Activated CD4-positive, alpha-beta memory T cell treated with anti-CD3 and anti-CD28 coated beads, Interleukin-2, amount 10 ng/mL, durations not matched to agents 7 days and 5 days (primary cell): ENCODE measurements at regions of chr12 and their contacts with region 1.

Region 1: GRCh38 chr12:120649442-120650232 is 9.2 kb downstream of the CABP1 start:
- DNase-seq: no peak
- H3K4me3 Mint-ChIP-seq: no peak overlapping the region
- H3K27ac Mint-ChIP-seq: no peak overlapping the region
- H3K4me1 Mint-ChIP-seq: peaks cover 16% of the 10 kb centered on the region
- H3K27me3 Mint-ChIP-seq: peaks cover 52% of the 10 kb centered on the region

Region 2: DNA sequence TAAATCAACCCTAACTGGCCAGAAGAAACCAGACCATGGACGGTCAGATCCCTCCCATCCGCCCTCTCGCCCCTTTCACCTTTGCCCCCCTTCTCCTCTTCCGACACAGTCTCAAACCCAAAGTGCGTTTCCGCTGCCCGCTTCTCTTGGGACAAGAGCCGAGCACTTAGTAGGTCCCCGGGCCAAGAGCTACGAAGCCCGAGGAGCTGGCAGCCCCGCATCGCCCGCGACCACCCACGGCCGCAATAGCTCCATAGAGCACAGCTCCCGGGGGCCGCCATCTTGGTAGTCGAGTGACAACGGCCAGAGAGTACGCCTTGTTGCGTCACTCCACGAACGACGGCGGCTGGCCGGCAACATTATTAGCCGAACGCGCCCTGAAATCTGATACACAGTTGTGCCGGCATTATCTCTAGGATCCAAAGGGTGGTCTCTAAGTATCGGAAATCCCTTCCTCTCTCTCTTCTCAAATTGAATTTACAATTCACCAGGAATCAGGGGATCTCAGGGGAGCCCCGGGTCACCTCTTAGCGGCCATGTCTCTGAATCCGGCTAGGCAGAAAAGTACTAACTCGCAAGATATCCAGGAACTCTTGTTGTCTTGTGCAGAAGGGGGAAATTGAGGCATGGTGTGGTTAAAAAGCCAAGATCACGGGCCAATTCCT is 120.6 kb before region 1 on chr12 and contains the start of gene COQ5:
- CTCF ChIA-PET with region 1: no interaction called
- POLR2A ChIA-PET with region 1: no interaction called
- DNase-seq: peak; percentile 88
- H3K4me3 Mint-ChIP-seq: peak within 1 kb of the TSS; percentile 100
- H3K27ac Mint-ChIP-seq: peak within 1 kb of the TSS; percentile 97
- H3K4me1 Mint-ChIP-seq: peaks cover 29% of the 10 kb centered on the region
- H3K27me3 Mint-ChIP-seq: no peaks in the 10 kb centered on the region
- total RNA-seq, gene COQ5: 30.3 to 30.8 TPM

Region 3: GRCh38 chr12:120625557-120626419 is 23.8 kb before region 1 on chr12:
- CTCF ChIA-PET with region 1: interaction called, 10 read pairs
- POLR2A ChIA-PET with region 1: no interaction called
- DNase-seq: no peak
- H3K4me3 Mint-ChIP-seq: no peak overlapping the region
- H3K27ac Mint-ChIP-seq: no peak overlapping the region
- H3K4me1 Mint-ChIP-seq: no peaks in the 10 kb centered on the region
- H3K27me3 Mint-ChIP-seq: peaks cover 3% of the 10 kb centered on the region

Region 4: GRCh38 chr12:120677765-120678473 is 28.3 kb after region 1 on chr12:
- CTCF ChIA-PET with region 1: interaction called, 36 read pairs
- POLR2A ChIA-PET with region 1: interaction called, 4 read pairs
- DNase-seq: peak; percentile 65
- H3K4me3 Mint-ChIP-seq: peak overlapping the region; percentile 62
- H3K27ac Mint-ChIP-seq: peak overlapping the region; percentile 93
- H3K4me1 Mint-ChIP-seq: peaks cover 34% of the 10 kb centered on the region
- H3K27me3 Mint-ChIP-seq: peaks cover 5% of the 10 kb centered on the region

Region 5: GRCh38 chr12:120698665-120699064 is 49.0 kb after region 1 on chr12:
- CTCF ChIA-PET with region 1: interaction called, 91 read pairs
- POLR2A ChIA-PET with region 1: interaction called, 3 read pairs
- DNase-seq: no peak
- H3K4me3 Mint-ChIP-seq: no peak overlapping the region
- H3K27ac Mint-ChIP-seq: peak overlapping the region; percentile 33
- H3K4me1 Mint-ChIP-seq: peaks cover 7% of the 10 kb centered on the region
- H3K27me3 Mint-ChIP-seq: no peaks in the 10 kb centered on the region

Region 6: GRCh38 chr12:120775862-120776552 is 126.4 kb after region 1 on chr12:
- CTCF ChIA-PET with region 1: no interaction called
- POLR2A ChIA-PET with region 1: no interaction called
- DNase-seq: no peak
- H3K4me3 Mint-ChIP-seq: no peak overlapping the region
- H3K27ac Mint-ChIP-seq: no peak overlapping the region
- H3K4me1 Mint-ChIP-seq: peaks cover 21% of the 10 kb centered on the region
- H3K27me3 Mint-ChIP-seq: no peaks in the 10 kb centered on the region

Region 7: DNA sequence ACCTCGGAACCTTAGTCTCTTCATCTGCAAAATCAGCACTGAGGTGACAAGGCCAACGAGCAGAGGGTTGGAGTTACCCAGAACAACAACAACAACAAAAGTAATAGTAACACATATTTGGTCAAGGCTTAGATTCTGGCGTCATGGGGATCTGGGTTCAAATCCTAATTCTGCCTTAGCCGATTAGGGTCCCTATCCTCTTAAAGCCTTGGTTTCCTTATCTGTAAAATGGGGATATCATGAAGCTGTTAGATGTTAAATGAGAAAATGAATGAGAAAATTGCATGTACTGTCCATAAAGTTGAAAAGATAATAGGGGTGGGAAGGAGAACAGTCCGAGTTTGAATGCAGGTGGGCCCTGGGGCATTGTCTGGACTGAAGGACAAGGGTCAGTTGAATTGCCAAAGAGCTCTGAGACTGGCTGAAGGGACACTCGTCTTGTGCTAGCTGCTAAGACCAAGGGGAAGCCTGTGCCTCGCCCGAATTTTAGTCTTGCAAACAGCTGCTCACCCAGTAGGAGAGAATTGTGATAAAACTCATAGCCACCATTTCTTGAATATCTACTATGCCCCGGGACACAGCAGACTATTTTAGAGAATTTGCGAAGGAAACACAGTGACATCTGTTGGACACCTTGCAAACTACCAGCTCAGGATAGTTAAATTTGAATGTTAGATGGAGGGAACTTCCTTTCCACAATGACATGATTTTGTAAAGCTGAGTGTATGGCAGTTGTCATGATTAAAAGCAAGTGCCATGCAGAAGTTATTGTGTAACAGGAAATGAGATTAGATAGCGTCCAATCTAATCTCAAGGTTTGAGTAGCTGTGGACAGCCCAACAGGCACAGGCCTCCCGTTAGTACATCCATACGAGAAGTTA is 321.9 kb after region 1 on chr12:
- CTCF ChIA-PET with region 1: interaction called, 61 read pairs
- POLR2A ChIA-PET with region 1: no interaction called
- DNase-seq: peak; percentile 28
- H3K4me3 Mint-ChIP-seq: no peak overlapping the region
- H3K27ac Mint-ChIP-seq: no peak overlapping the region
- H3K4me1 Mint-ChIP-seq: peaks cover 7% of the 10 kb centered on the region
- H3K27me3 Mint-ChIP-seq: peaks cover 1% of the 10 kb centered on the region